Activated naive CD4-positive, alpha-beta T cell treated with anti-CD3 and anti-CD28 coated beads for 36 hours (primary cell): ENCODE measurements at regions of chr1 and their contacts with region 1.

Region 1: GRCh38 chr1:205523891-205524793 is 19.7 kb downstream of the CDK18 start:
- DNase-seq: peak; percentile 88
- H3K4me3 Mint-ChIP-seq: no peak overlapping the region
- H3K27ac Mint-ChIP-seq: no peak overlapping the region
- H3K4me1 Mint-ChIP-seq: no peaks in the 10 kb centered on the region
- H3K27me3 Mint-ChIP-seq: no peaks in the 10 kb centered on the region

Region 2: GRCh38 chr1:205335643-205336091 is 188.5 kb before region 1 on chr1:
- CTCF ChIA-PET with region 1: interaction called, 70 read pairs
- intact Hi-C with region 1: loop called (anchors 1 kb)
- DNase-seq: peak; percentile 92
- H3K4me3 Mint-ChIP-seq: no peak overlapping the region
- H3K27ac Mint-ChIP-seq: no peak overlapping the region
- H3K4me1 Mint-ChIP-seq: no peaks in the 10 kb centered on the region
- H3K27me3 Mint-ChIP-seq: no peaks in the 10 kb centered on the region

Region 3: GRCh38 chr1:205354259-205354904 is 169.8 kb before region 1 on chr1:
- CTCF ChIA-PET with region 1: interaction called, 69 read pairs
- intact Hi-C with region 1: loop called (anchors 1 kb)
- DNase-seq: peak; percentile 82
- H3K4me3 Mint-ChIP-seq: no peak overlapping the region
- H3K27ac Mint-ChIP-seq: no peak overlapping the region
- H3K4me1 Mint-ChIP-seq: no peaks in the 10 kb centered on the region
- H3K27me3 Mint-ChIP-seq: no peaks in the 10 kb centered on the region

Region 4: DNA sequence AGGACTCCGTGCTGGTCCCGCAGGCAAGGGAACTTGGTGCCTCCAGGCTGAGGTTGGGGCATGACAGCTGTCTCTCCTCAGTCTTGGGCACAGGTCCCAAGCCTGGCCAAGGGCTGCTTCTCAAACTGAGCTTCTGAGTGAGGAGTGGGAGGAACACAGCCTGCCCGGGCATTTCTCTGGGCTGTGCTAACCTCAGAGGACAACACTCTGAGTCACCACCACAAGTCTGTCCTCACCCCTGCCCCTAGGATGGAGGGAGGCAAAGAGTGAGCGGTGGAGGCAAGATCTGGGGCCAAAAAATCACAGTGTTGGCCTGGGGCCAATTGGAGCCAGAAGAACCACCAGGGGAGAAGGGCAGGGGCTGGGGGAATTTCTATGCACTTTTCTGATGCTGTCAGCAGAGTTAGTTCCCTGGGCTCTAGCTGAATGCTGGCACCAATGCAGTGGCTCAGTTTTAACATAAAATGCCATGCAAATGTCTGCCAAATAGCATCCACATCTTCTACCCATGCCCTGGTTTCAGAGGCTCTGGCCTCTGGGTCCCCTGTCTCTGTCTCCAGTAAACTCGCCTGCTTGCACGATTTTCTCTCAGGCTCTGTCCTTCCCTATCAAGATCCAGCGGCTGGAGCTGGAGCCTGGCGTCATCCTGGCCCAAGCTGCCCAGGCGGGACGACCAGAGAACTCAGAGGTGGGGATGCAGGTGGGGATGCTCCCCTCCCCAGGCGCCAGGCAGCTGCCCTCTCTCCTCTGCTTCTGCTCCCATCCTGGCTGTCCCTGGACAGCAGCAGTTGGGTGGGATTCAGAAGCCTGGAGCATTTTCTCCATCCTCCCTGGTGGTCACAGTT is 30.7 kb before region 1 on chr1:
- CTCF ChIA-PET with region 1: interaction called, 221 read pairs
- intact Hi-C with region 1: loop called (anchors 1 kb)
- DNase-seq: no peak
- H3K4me3 Mint-ChIP-seq: no peak overlapping the region
- H3K27ac Mint-ChIP-seq: no peak overlapping the region
- H3K4me1 Mint-ChIP-seq: no peaks in the 10 kb centered on the region
- H3K27me3 Mint-ChIP-seq: peaks cover 29% of the 10 kb centered on the region

Region 5: DNA sequence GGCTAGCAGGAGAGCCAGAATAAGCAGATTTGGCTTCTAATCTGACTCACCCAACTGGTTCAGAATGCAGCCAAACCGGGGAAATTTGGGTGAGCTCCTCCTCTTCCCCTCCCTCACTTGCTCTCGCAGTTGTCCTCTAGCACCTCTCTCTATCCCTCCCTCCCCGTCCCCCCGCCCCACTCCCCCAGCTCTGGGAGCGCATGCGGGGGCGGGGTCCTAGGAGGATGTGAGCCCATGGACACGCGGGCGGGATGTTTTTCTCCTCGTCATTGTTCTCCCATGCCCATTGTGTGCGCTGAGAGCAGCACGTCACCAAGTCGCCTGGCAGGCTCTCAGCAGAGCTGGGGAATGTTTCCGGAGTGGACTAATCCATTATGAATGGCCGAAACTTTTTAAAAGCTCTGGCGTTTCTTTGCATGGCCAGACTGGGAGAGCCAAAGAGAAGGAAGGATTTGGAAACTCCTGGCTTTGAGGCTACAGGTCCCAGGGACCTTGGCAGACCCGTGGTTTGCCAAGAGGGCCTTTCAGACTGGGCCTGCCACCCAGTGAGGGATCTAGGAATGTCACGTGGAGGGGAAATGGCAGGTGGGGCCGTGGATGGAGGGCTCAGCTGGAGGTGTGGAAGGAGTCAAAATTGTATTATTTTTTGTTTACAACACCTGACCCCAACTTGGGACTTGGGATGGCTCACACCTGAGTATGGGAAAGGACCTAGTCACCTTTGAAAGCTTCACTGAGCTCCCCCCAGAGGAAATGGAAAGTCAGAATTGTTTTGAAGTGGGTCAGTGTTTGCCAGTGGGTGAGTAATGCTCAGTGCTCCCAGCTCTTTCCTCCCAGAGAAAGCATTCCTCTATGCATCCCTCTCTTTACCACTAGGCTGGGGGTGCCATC is 19.5 kb after region 1 on chr1:
- CTCF ChIA-PET with region 1: interaction called, 40 read pairs
- intact Hi-C with region 1: no loop called
- DNase-seq: peak; percentile 61
- H3K4me3 Mint-ChIP-seq: peak overlapping the region; percentile 36
- H3K27ac Mint-ChIP-seq: no peak overlapping the region
- H3K4me1 Mint-ChIP-seq: peaks cover 11% of the 10 kb centered on the region
- H3K27me3 Mint-ChIP-seq: peaks cover 23% of the 10 kb centered on the region

Region 6: DNA sequence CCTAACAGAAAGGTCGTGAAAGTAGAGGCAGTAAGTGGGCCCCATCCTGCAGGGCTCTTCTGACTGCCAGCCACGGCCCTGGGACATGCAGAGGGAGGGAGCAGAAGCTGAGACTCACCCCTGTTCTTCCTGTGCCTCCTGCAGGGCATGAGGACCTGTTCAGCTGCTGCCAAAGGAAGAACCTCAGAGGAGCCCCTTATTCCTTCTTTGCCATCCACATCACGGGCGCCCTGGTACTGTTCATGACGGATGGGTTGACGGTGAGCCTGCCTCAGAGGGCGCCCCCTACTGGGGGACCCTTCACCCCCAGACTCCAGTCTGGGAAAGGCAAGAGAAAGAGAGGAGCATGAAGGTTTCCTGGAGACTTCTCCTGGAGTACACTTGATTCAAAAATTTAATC is 60.6 kb after region 1 on chr1:
- CTCF ChIA-PET with region 1: interaction called, 11 read pairs
- intact Hi-C with region 1: no loop called
- DNase-seq: peak; percentile 8
- H3K4me3 Mint-ChIP-seq: no peak overlapping the region
- H3K27ac Mint-ChIP-seq: no peak overlapping the region
- H3K4me1 Mint-ChIP-seq: peaks cover 6% of the 10 kb centered on the region
- H3K27me3 Mint-ChIP-seq: no peaks in the 10 kb centered on the region

Region 7: DNA sequence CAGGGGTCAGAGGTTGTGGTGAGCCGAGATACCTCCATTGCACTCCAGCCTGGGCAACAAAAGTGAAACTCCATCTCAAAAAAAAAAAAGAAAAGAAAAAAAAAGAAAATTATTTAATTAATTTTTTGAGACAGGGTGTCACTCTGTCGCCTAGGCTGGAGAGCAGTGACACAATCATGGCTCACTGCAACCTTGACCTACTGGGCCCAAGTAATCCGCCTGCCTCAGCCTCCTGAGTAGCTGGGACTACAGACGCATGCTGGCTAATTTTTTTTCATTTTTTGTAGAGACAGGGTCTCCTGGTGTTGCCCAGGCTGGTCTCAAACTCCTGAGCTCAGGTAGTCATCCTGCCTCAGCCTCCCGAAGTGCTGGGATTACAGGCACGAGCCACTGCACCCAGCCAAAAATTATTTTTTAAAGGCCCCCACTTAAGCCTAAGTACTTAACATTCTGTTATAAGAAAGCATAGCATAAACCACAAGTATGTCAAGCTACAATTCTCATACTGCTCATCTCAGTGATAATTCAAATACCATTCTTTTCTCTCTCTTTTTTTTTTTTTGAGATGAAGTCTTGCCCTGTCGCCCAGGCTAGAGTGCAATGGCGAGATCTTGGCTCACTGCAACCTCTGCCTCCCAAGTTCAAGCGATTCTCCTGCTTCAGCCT is 205.9 kb after region 1 on chr1:
- CTCF ChIA-PET with region 1: no interaction called
- intact Hi-C with region 1: no loop called
- DNase-seq: no peak
- H3K4me3 Mint-ChIP-seq: no peak overlapping the region
- H3K27ac Mint-ChIP-seq: no peak overlapping the region
- H3K4me1 Mint-ChIP-seq: peaks cover 33% of the 10 kb centered on the region
- H3K27me3 Mint-ChIP-seq: no peaks in the 10 kb centered on the region

Region 8: GRCh38 chr1:205812878-205813754 is 289.0 kb after region 1 on chr1 and contains the start of gene SLC41A1:
- CTCF ChIA-PET with region 1: no interaction called
- intact Hi-C with region 1: no loop called
- DNase-seq: peak; percentile 95
- H3K4me3 Mint-ChIP-seq: peak within 1 kb of the TSS; percentile 89
- H3K27ac Mint-ChIP-seq: peak within 1 kb of the TSS; percentile 74
- H3K4me1 Mint-ChIP-seq: peaks cover 49% of the 10 kb centered on the region
- H3K27me3 Mint-ChIP-seq: no peaks in the 10 kb centered on the region
- total RNA-seq, gene SLC41A1: 32.1 to 33.9 TPM